Astrocyte of the cerebellum (primary cell): ENCODE measurements at regions of chr1 and their contacts with region 1.

Region 1: DNA sequence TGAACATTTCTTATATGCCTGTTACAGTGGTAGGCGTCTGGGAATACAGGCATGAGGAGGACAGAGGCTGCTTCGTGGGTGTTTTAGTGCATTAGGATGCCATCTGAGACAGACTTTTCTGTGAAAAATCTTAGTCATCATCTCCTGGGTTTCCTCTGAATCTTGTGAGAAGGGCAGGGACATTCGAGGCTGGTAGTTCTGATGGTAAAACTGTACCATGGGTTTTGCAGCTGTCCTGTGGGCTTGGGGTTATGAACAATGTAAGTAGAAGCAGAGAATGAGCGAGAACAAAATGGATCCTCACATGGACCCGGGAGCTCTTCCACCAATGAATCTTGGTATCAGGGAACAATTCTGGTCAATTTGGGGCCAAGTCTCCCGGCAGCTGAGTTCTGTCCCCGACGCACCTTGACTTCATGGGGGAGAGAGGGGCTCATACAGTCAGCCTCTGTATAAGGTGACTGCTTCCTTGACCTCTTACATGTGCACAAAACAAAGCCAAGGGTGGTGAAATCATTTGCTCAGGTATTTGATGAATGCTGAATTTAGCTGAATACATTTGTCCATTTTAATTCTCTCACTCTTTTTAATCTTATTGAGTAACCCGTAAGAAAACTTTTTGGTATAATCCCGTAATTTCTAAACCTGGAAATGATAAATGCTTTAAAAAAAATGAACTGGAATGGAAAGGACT is 63.6 kb upstream of the ERRFI1 start:
- DNase-seq: no peak
- H3K4me3 ChIP-seq: no peak overlapping the region
- CTCF ChIP-seq: no peak

Region 2: DNA sequence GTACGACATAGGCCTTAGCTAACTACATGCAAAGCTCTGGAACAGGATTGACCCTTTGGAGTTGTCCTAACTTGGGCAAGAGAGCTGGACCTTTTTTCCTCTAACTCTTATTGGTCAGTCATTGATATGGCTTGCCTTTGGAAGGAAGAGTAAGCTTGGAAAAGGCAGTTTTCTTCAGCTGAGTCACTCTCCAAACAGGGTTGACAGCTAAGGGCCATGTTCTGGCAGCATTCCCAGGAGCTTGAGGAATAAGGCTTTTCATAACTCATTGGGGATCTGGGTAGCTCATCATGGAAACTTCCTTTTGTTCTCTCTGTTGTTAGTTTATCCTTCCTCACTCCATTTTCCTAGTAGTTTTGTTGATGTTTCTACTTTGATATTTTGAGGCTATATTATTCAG is 49.1 kb before region 1 on chr1:
- in situ Hi-C with region 1: loop called (anchors 5 kb)
- DNase-seq: peak; percentile 95
- H3K4me3 ChIP-seq: no peak overlapping the region
- CTCF ChIP-seq: no peak